Ovary (tissue), 10 donors: ENCODE measurements at regions of chr17 and their contacts with region 1.

Region 1: DNA sequence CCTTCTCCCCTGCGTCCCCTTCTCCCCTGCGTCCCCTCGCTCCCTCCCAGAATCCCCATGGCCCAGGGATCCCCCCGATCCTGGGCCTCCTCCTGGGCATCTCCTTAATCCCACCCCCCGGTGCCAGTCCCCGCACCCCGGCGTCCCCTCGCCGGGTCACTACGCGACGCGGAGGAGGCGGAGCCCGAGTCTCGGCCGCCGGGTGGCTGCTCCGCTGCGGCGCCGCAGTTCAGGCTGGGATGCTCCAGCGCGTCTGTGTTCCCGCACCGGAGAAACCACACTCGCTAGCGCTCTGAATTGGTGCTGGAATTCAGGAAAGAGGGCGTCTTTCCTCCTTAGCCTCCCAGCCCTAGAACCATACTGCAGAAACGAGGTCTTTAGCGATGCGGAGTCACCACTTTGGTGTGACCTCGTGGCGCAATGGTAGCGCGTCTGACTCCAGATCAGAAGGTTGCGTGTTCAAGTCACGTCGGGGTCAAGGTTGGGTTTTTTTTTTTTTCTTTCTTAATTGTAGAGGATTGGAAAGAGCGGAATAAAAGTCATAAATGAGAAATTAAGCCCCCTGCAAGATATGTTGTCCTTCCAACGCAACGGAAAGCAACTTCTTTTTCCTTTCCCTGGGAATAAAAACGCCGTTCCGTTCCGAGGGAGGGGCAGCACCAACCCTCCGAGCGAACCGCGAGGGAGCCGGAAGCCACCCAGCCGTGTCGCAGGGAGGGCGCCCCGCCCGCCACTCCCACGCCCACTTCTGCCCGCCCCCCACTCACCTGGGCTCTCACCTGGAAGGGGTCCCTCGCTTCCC is 25.7 kb upstream of the SLC47A1 start:
- DNase-seq: peak; percentile 89 to 96 (median 94)
- H3K4me3 ChIP-seq: peak overlapping the region; percentile 87
- H3K27ac ChIP-seq: peak overlapping the region; percentile 93 to 94
- H3K4me1 ChIP-seq: no peaks in the 10 kb centered on the region
- H3K27me3 ChIP-seq: no peaks in the 10 kb centered on the region
- CTCF ChIP-seq: peak in 2 of 3 donors; percentile 9 to 15
- EP300 ChIP-seq: no peak
- POLR2A ChIP-seq: peak; percentile 53

Region 2: DNA sequence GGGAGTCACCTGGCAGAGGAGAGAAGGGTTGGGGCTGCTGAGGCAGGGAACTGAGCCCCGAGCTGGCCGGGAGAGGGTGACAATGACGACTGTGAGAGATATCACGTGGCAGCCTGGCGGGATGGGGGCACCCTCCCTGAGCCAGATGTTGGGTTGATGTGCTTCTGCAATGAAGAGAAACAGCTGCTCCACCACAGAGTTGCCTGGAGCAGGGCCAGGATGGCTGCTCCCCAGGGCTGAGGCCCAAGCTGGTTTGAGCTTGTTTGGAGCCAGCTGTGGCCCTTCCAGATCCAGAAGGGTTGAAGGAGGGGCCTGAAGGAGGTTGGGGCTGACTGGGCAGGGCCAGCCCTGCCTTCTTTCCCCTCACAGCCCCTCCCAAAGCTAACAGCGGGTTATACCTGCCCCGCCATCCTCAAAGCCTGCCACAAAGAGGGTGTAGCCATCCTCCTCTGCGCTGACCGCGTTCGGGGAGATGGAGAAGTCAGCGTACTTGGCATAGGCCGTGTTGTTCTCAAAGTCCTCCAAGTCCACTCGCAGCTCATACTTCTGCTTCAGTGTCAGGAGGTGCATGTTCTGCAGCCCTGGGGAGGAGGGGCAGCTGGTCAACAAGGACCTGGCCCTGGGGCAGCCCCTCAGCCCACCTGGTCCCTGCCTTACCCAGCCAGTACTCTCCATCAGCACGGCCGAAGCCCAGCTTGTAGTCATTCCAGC is 123.1 kb before region 1 on chr17:
- intact Hi-C with region 1: loop called in 1 of 4 experiments (anchors 5 kb)
- DNase-seq: peak; percentile 94 to 97 (median 97)
- H3K4me3 ChIP-seq: no peak overlapping the region
- H3K27ac ChIP-seq: peak overlapping the region; percentile 89 to 93
- H3K4me1 ChIP-seq: peaks cover 40% of the 10 kb centered on the region
- H3K27me3 ChIP-seq: no peaks in the 10 kb centered on the region
- CTCF ChIP-seq: no peak
- EP300 ChIP-seq: no peak
- POLR2A ChIP-seq: no peak

Region 3: GRCh38 chr17:19457830-19458271 is 50.1 kb before region 1 on chr17:
- intact Hi-C with region 1: loop called in 1 of 4 experiments (anchors 10 kb)
- DNase-seq: no peak
- H3K4me3 ChIP-seq: no peak overlapping the region
- H3K27ac ChIP-seq: no peak overlapping the region
- H3K4me1 ChIP-seq: no peaks in the 10 kb centered on the region
- H3K27me3 ChIP-seq: no peaks in the 10 kb centered on the region
- CTCF ChIP-seq: no peak
- EP300 ChIP-seq: no peak
- POLR2A ChIP-seq: no peak

Region 4: GRCh38 chr17:19470532-19471261 is 37.3 kb before region 1 on chr17:
- intact Hi-C with region 1: loop called in 1 of 4 experiments (anchors 5 kb)
- DNase-seq: peak; percentile 69 to 85 (median 75)
- H3K4me3 ChIP-seq: peak overlapping the region; percentile 4
- H3K27ac ChIP-seq: peak overlapping the region in 1 of 2 donors; percentile 67
- H3K4me1 ChIP-seq: peaks cover 4% of the 10 kb centered on the region
- H3K27me3 ChIP-seq: no peaks in the 10 kb centered on the region
- CTCF ChIP-seq: no peak
- EP300 ChIP-seq: no peak
- POLR2A ChIP-seq: no peak